ENCODE measurements at regions of chr3 and their contacts with region 1.

Region 1: DNA sequence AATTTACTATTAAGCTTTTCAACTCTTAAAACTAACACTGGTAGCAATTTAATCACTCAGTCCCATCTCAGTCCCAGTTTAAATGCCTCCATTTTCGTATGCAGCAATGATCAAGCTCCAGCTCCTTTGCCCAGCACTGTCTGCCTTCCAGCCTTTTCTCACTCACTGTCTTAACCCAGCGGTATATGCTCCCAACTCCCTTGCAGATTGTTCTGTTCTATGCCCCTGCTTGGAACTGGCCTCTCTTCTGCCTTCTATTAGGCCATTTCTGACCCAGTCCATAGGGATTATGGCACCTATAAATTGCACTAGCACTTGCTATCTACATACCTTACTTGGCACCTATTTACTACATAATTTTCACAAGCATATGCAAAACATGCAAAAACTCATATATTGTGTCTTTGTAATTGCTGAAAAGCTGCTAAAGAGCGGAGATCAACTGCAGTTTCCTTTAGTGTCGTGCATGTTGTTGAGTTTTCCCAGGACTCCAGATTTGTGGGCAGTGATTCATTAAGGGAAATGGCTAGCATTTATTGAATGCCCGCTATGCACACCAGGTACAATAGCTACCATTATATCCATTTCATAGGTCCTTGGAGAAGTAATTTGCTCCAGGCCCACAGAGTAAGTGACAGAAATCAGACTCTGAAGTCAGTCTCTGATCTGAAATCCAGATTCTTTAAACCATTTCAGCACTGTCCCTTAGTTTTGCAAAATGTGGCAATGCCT is 24.4 kb downstream of the CRBN start:
- DNase-seq: no peak
- ATAC-seq: no peak
- H3K4me3 ChIP-seq: no peak overlapping the region
- H3K4me3 Mint-ChIP-seq: no peak overlapping the region
- H3K27ac ChIP-seq: peak overlapping the region in 1 of 2 experiments; percentile 13
- H3K27ac Mint-ChIP-seq: peak overlapping the region; percentile 50
- H3K4me1 ChIP-seq: no peaks in the 10 kb centered on the region
- H3K4me1 Mint-ChIP-seq: peaks cover 68% of the 10 kb centered on the region
- H3K27me3 ChIP-seq: no peaks in the 10 kb centered on the region
- H3K27me3 Mint-ChIP-seq: no peaks in the 10 kb centered on the region
- CTCF ChIP-seq: no peak

Region 2: GRCh38 chr3:3097958-3098357 is 57.1 kb before region 1 on chr3:
- CTCF ChIA-PET with region 1: no interaction called
- POLR2A ChIA-PET with region 1: no interaction called
- intact Hi-C with region 1: no loop called
- DNase-seq: no peak
- ATAC-seq: no peak
- H3K4me3 ChIP-seq: no peak overlapping the region
- H3K4me3 Mint-ChIP-seq: no peak overlapping the region
- H3K27ac ChIP-seq: no peak overlapping the region
- H3K27ac Mint-ChIP-seq: no peak overlapping the region
- H3K4me1 ChIP-seq: no peaks in the 10 kb centered on the region
- H3K4me1 Mint-ChIP-seq: no peaks in the 10 kb centered on the region
- H3K27me3 ChIP-seq: no peaks in the 10 kb centered on the region
- H3K27me3 Mint-ChIP-seq: peaks cover 7% of the 10 kb centered on the region
- CTCF ChIP-seq: no peak

Region 3: GRCh38 chr3:3137526-3137925 is 17.5 kb before region 1 on chr3:
- CTCF ChIA-PET with region 1: interaction called, 4 read pairs
- POLR2A ChIA-PET with region 1: interaction called, 5 read pairs
- intact Hi-C with region 1: loop called in 1 of 2 experiments (anchors 2 kb)
- DNase-seq: no peak
- ATAC-seq: no peak
- H3K4me3 ChIP-seq: no peak overlapping the region
- H3K4me3 Mint-ChIP-seq: no peak overlapping the region
- H3K27ac ChIP-seq: no peak overlapping the region
- H3K27ac Mint-ChIP-seq: peak overlapping the region; percentile 66
- H3K4me1 ChIP-seq: peaks cover 17% of the 10 kb centered on the region
- H3K4me1 Mint-ChIP-seq: peaks cover 58% of the 10 kb centered on the region
- H3K27me3 ChIP-seq: no peaks in the 10 kb centered on the region
- H3K27me3 Mint-ChIP-seq: no peaks in the 10 kb centered on the region
- CTCF ChIP-seq: no peak

Region 4: DNA sequence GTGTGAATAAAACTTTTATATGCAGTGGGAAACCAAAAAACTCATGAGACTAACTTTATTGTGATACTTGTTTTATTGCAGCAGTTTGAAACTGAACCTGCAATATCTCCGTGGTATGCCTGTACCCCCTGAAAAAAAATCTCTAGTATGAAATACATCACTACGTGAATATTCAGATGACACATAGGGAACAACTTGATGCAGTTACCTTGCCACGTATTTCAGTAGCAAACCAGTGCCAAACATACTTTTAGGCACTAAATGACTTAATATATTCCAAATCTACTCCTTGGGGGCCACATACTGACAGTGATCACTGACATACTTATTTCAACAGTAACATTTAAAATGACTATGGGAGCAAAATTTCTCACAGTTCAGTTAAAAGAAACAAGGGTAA is 10.6 kb after region 1 on chr3:
- CTCF ChIA-PET with region 1: interaction called, 4 read pairs
- POLR2A ChIA-PET with region 1: interaction called, 5 read pairs
- intact Hi-C with region 1: loop called in 1 of 2 experiments (anchors 2 kb)
- DNase-seq: no peak
- ATAC-seq: no peak
- H3K4me3 ChIP-seq: no peak overlapping the region
- H3K4me3 Mint-ChIP-seq: no peak overlapping the region
- H3K27ac ChIP-seq: no peak overlapping the region
- H3K27ac Mint-ChIP-seq: peak overlapping the region; percentile 49
- H3K4me1 ChIP-seq: peaks cover 4% of the 10 kb centered on the region
- H3K4me1 Mint-ChIP-seq: peaks cover 65% of the 10 kb centered on the region
- H3K27me3 ChIP-seq: no peaks in the 10 kb centered on the region
- H3K27me3 Mint-ChIP-seq: no peaks in the 10 kb centered on the region
- CTCF ChIP-seq: no peak